Activated CD4-positive, alpha-beta T cell treated with anti-CD3 and anti-CD28 coated beads, Interleukin-2, amount 10 ng/mL, durations not matched to agents 24 days and 14 days (primary cell): ENCODE measurements at regions of chrX and their contacts with region 1.

Region 1: DNA sequence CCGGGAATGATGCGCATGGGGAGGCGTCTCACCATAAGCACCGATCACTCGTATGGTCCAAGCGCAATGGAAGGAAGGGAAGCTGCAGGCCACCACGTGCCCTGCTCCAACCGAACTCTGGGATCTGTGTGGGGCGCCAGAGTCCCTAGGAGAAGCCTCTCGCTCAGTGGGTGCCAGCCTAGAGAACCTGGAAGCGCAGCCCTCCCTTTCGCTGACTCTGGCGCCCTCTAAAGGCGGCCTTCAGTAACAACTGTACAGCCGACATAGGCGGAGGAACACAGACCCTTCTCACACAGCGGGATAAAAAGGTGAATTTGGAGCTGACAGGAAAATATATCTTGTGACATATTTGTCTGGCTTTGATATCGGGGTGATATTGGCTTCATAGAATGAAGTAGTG is 76.0 kb downstream of the INTS6L start:
- DNase-seq: peak; percentile 82
- H3K4me3 Mint-ChIP-seq: no peak overlapping the region
- H3K27ac Mint-ChIP-seq: no peak overlapping the region
- H3K4me1 Mint-ChIP-seq: no peaks in the 10 kb centered on the region
- H3K27me3 Mint-ChIP-seq: peaks cover 25% of the 10 kb centered on the region

Region 2: GRCh38 chrX:134484039-134484438 is 1112.5 kb before region 1 on chrX:
- intact Hi-C with region 1: no loop called
- DNase-seq: peak; percentile 57
- H3K4me3 Mint-ChIP-seq: no peak overlapping the region
- H3K27ac Mint-ChIP-seq: no peak overlapping the region
- H3K4me1 Mint-ChIP-seq: no peaks in the 10 kb centered on the region
- H3K27me3 Mint-ChIP-seq: no peaks in the 10 kb centered on the region

Region 3: DNA sequence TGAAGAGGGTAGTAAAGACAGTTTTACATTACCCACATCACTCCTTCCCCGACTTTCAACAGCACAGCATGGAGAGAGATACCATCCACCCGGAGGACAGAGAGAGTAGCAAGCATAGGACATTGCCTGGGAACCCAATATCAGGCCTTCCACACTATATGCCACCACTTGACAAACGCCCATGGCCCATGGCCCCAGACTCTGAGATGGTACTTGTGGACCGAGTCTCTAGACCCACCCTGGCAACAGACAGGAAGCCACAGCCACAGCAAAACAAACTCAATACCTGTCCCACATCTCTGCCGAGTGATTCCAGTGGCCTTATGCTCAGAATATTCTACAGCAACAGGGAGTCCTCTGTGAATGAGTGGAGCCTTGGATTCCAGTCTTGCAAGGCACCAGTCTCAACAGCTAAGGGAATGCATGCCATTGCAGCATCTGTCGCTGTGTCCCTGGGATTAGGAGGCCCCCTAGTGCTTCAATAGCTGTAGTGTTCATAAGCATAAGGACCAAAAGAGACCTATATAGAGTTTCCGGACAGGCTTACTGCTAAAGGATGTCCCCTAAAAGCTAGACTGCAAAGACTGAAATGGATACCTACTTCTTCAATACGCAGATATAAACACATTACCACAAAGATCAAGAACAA is 410.6 kb before region 1 on chrX:
- intact Hi-C with region 1: loop called (anchors 5 kb)
- DNase-seq: peak; percentile 80
- H3K4me3 Mint-ChIP-seq: no peak overlapping the region
- H3K27ac Mint-ChIP-seq: no peak overlapping the region
- H3K4me1 Mint-ChIP-seq: no peaks in the 10 kb centered on the region
- H3K27me3 Mint-ChIP-seq: peaks cover 30% of the 10 kb centered on the region

Region 4: GRCh38 chrX:135484641-135485289 is 111.7 kb before region 1 on chrX:
- intact Hi-C with region 1: loop called (anchors 1 kb)
- DNase-seq: peak; percentile 70
- H3K4me3 Mint-ChIP-seq: no peak overlapping the region
- H3K27ac Mint-ChIP-seq: no peak overlapping the region
- H3K4me1 Mint-ChIP-seq: peaks cover 3% of the 10 kb centered on the region
- H3K27me3 Mint-ChIP-seq: peaks cover 3% of the 10 kb centered on the region